ENCODE measurements at regions of chr11 and their contacts with region 1.

Region 1: GRCh38 chr11:65382033-65382807 is at the start of gene SLC25A45:
- DNase-seq: peak; percentile 97
- H3K4me3 Mint-ChIP-seq: peak within 1 kb of the TSS; percentile 83
- H3K27ac Mint-ChIP-seq: peak within 1 kb of the TSS; percentile 96
- H3K4me1 Mint-ChIP-seq: peaks cover 40% of the 10 kb centered on the region
- H3K27me3 Mint-ChIP-seq: no peaks in the 10 kb centered on the region
- total RNA-seq, gene SLC25A45: 15.5 and 16.8 TPM in 2 replicates

Region 2: GRCh38 chr11:65366340-65366773 is 15.9 kb before region 1 on chr11:
- intact Hi-C with region 1: loop called (anchors 1 kb)
- DNase-seq: peak; percentile 80
- H3K4me3 Mint-ChIP-seq: no peak overlapping the region
- H3K27ac Mint-ChIP-seq: no peak overlapping the region
- H3K4me1 Mint-ChIP-seq: peaks cover 6% of the 10 kb centered on the region
- H3K27me3 Mint-ChIP-seq: peaks cover 3% of the 10 kb centered on the region

Region 3: GRCh38 chr11:65418711-65419459 is 36.7 kb after region 1 on chr11:
- intact Hi-C with region 1: loop called (anchors 1 kb)
- DNase-seq: peak; percentile 96
- H3K4me3 Mint-ChIP-seq: peak overlapping the region; percentile 100
- H3K27ac Mint-ChIP-seq: peak overlapping the region; percentile 100
- H3K4me1 Mint-ChIP-seq: peaks cover 55% of the 10 kb centered on the region
- H3K27me3 Mint-ChIP-seq: peaks cover 5% of the 10 kb centered on the region

Region 4: GRCh38 chr11:65425105-65425970 is 43.1 kb after region 1 on chr11:
- intact Hi-C with region 1: loop called (anchors 1 kb)
- DNase-seq: peak; percentile 93
- H3K4me3 Mint-ChIP-seq: peak overlapping the region; percentile 100
- H3K27ac Mint-ChIP-seq: peak overlapping the region; percentile 100
- H3K4me1 Mint-ChIP-seq: peaks cover 67% of the 10 kb centered on the region
- H3K27me3 Mint-ChIP-seq: peaks cover 7% of the 10 kb centered on the region

Region 5: GRCh38 chr11:65477149-65477965 is 95.1 kb after region 1 on chr11:
- intact Hi-C with region 1: loop called (anchors 1 kb)
- DNase-seq: peak; percentile 97
- H3K4me3 Mint-ChIP-seq: peak overlapping the region; percentile 97
- H3K27ac Mint-ChIP-seq: peak overlapping the region; percentile 100
- H3K4me1 Mint-ChIP-seq: peaks cover 22% of the 10 kb centered on the region
- H3K27me3 Mint-ChIP-seq: no peaks in the 10 kb centered on the region

Region 6: DNA sequence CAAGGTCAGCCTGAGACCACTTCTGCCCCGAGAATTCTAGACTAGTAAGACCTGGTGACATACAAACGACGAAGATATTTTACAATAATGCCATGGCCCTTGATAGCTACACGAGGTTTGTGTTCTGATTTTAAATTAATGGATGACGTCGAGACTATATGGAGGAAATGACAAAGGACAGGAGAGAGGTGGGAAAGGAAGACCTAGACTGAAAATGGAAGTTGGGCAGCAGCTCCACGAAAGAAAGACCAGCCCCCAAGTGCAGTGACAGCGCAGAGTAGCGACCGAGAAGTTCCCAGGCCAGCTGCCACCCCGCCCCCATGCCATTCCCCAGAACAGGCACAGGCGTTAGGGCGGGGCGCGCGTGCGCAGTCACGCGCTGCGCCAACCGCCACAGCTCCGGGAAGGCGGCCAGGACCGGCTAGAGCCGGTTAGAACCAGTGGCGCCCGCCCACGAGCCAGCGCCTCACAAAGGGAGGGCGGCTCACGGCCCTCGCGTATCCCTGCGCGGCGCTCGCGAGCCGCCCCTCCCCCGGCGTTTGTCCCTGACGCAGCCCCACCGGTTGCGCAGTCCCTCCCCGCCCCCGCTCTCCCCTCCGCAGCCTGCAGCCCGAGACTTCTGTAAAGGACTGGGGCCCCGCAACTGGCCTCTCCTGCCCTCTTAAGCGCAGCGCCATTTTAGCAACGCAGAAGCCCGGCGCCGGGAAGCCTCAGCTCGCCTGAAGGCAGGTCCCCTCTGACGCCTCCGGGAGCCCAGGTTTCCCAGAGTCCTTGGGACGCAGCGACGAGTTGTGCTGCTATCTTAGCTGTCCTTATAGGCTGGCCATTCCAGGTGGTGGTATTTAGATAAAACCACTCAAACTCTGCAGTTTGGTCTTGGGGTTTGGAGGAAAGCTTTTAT is 115.2 kb after region 1 on chr11:
- intact Hi-C with region 1: loop called (anchors 1 kb)
- DNase-seq: peak; percentile 99
- H3K4me3 Mint-ChIP-seq: no peak overlapping the region
- H3K27ac Mint-ChIP-seq: no peak overlapping the region
- H3K4me1 Mint-ChIP-seq: peaks cover 44% of the 10 kb centered on the region
- H3K27me3 Mint-ChIP-seq: no peaks in the 10 kb centered on the region

Region 7: GRCh38 chr11:65506770-65507505 is 124.7 kb after region 1 on chr11:
- intact Hi-C with region 1: loop called (anchors 1 kb)
- DNase-seq: peak; percentile 81
- H3K4me3 Mint-ChIP-seq: no peak overlapping the region
- H3K27ac Mint-ChIP-seq: peak overlapping the region; percentile 92
- H3K4me1 Mint-ChIP-seq: peaks cover 55% of the 10 kb centered on the region
- H3K27me3 Mint-ChIP-seq: no peaks in the 10 kb centered on the region

Region 8: GRCh38 chr11:65873318-65874156 is 491.3 kb after region 1 on chr11:
- intact Hi-C with region 1: no loop called
- DNase-seq: peak; percentile 100
- H3K4me3 Mint-ChIP-seq: peak overlapping the region; percentile 80
- H3K27ac Mint-ChIP-seq: peak overlapping the region; percentile 22
- H3K4me1 Mint-ChIP-seq: peaks cover 19% of the 10 kb centered on the region
- H3K27me3 Mint-ChIP-seq: no peaks in the 10 kb centered on the region